Left ventricle myocardium superior (tissue), 1 donor: ENCODE measurements at regions of chr12 and their contacts with region 1.

Region 1: GRCh38 chr12:85872497-85873091 is 1.5 kb upstream of the NTS start:
- DNase-seq: no peak
- ATAC-seq: no peak

Region 2: GRCh38 chr12:85476756-85477155 is 395.8 kb before region 1 on chr12:
- intact Hi-C with region 1: loop called (anchors 2 kb)
- DNase-seq: no peak
- ATAC-seq: no peak

Region 3: GRCh38 chr12:85708775-85709174 is 163.8 kb before region 1 on chr12:
- intact Hi-C with region 1: loop called (anchors 10 kb)
- DNase-seq: no peak
- ATAC-seq: no peak